ENCODE measurements at regions of chr17 and their contacts with region 1.

Region 1: DNA sequence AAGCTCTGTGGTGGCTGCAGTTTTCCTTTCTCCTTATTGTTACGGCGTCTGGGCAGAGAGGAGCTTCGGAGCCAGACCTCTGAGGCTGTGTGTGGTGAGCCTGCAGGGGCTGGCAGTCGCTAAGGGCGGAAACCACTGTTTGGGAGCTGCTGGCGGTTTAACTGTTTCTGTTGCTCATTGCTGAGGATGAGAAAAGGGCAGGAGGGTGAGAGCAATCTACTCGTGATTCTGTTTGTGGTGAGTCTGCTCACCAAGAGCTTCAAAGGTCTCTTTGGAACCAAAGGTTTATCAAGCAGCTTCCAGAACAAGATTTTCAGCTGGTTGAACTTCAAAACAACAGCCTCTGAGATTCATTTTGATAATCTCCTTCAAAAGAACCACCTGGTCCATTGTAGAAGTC is 143.9 kb downstream of the ANKFN1 start:
- DNase-seq: peak; percentile 7
- H3K4me3 ChIP-seq: no peak overlapping the region
- H3K27ac ChIP-seq: no peak overlapping the region
- H3K4me1 ChIP-seq: peaks cover 8% of the 10 kb centered on the region
- H3K27me3 ChIP-seq: peaks cover 7 to 8% of the 10 kb centered on the region in 2 experiments
- CTCF ChIP-seq: no peak
- POLR2A ChIP-seq: no peak

Region 2: GRCh38 chr17:56172517-56172982 is 124.6 kb before region 1 on chr17:
- CTCF ChIA-PET with region 1: no interaction called
- POLR2A ChIA-PET with region 1: no interaction called
- dilution Hi-C with region 1: loop called (anchors 10 kb)
- intact Hi-C with region 1: no loop called
- DNase-seq: no peak
- H3K4me3 ChIP-seq: no peak overlapping the region
- H3K27ac ChIP-seq: no peak overlapping the region
- H3K4me1 ChIP-seq: no peaks in the 10 kb centered on the region
- H3K27me3 ChIP-seq: peaks cover 0 to 7% of the 10 kb centered on the region in 2 experiments
- CTCF ChIP-seq: no peak
- POLR2A ChIP-seq: no peak

Region 3: GRCh38 chr17:56373981-56374833 is 77.0 kb after region 1 on chr17:
- CTCF ChIA-PET with region 1: no interaction called
- POLR2A ChIA-PET with region 1: no interaction called
- dilution Hi-C with region 1: no loop called
- intact Hi-C with region 1: no loop called
- DNase-seq: no peak
- H3K4me3 ChIP-seq: no peak overlapping the region
- H3K27ac ChIP-seq: no peak overlapping the region
- H3K4me1 ChIP-seq: no peaks in the 10 kb centered on the region
- H3K27me3 ChIP-seq: no peaks in the 10 kb centered on the region
- CTCF ChIP-seq: no peak
- POLR2A ChIP-seq: no peak